Heart right ventricle (tissue), 16 donors: ENCODE measurements at regions of chr3 and their contacts with region 1.

Region 1: GRCh38 chr3:66483406-66483906 is 17.4 kb downstream of the LRIG1 start:
- DNase-seq: peak; percentile 51 to 60
- ATAC-seq: peak; percentile 47 to 83 (median 72)
- H3K4me3 ChIP-seq: peak overlapping the region in 1 of 10 donors; percentile 11
- H3K27ac ChIP-seq: peak overlapping the region; percentile 71 to 92 (median 84)
- H3K4me1 ChIP-seq: peaks cover 42 to 99% (median 92%) of the 10 kb centered on the region in 9 donors
- H3K27me3 ChIP-seq: no peaks in the 10 kb centered on the region
- CTCF ChIP-seq: peak in 1 of 9 donors; percentile 9

Region 2: DNA sequence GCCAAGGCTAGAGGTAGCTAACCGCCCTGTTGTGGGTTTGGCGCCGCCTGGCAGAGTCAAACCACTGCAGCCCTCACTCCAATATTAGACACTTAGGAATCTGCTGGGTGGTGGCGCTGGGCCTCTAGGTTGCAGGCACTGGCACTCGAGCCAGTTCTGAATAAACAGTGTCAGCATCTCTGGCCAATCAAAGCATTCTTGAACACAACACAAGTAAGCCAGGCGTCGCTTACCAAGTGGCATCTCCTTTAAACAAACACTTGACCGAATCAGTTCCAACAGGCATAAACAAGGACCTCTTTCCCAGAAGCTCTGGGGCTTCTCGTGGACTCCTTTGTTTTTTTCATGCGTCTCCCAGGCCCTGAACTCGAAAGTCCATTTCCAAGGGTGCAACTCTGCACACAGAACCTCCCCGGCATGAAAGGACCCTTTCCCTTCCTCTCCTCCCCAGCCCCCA is 65.0 kb before region 1 on chr3:
- intact Hi-C with region 1: loop called in 1 of 10 experiments (anchors 5 kb)
- DNase-seq: no peak
- ATAC-seq: peak; percentile 54 to 84 (median 68)
- H3K4me3 ChIP-seq: no peak overlapping the region
- H3K27ac ChIP-seq: peak overlapping the region in 7 of 10 donors; percentile 26 to 62 (median 34)
- H3K4me1 ChIP-seq: peaks cover 7 to 64% (median 46%) of the 10 kb centered on the region in 9 donors
- H3K27me3 ChIP-seq: no peaks in the 10 kb centered on the region
- CTCF ChIP-seq: peak in 5 of 9 donors; percentile 7 to 47 (median 44)

Region 3: GRCh38 chr3:66625505-66626216 is 142.2 kb after region 1 on chr3:
- intact Hi-C with region 1: no loop called
- DNase-seq: no peak
- ATAC-seq: no peak
- H3K4me3 ChIP-seq: no peak overlapping the region
- H3K27ac ChIP-seq: no peak overlapping the region
- H3K4me1 ChIP-seq: peaks cover 0 to 7% (median 0%) of the 10 kb centered on the region in 9 donors
- H3K27me3 ChIP-seq: no peaks in the 10 kb centered on the region
- CTCF ChIP-seq: no peak